WTC11 (cell line): ENCODE measurements at regions of chr6 and their contacts with region 1.

Region 1: DNA sequence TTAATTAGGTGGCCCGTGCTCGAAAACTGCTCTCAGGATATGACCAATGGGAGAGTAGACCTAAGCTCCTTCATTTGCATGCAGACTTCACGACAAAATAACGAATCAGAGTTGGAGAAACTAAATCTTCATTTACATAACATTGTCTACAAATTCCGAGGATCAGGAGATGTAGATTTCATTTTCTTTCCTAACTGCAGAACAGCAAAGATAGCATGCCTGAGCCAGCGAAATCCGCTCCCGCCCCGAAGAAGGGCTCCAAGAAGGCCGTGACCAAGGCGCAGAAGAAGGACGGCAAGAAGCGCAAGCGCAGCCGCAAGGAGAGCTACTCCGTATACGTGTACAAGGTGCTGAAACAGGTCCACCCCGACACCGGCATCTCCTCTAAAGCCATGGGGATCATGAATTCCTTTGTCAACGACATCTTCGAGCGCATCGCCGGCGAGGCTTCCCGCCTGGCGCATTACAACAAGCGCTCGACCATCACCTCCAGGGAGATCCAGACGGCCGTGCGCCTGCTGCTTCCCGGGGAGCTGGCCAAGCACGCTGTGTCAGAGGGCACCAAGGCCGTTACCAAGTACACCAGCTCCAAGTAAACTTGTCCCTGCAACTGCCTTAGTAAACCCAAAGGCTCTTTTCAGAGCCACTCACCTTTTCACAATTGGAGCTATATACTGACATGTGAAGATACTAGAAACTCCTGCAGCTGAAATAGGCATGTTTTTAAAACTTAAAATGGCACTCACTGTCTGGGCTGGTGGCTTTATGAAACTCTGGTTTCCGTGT is 96.5 kb downstream of the HFE start:
- DNase-seq: peak; percentile 74
- ATAC-seq: peak; percentile 78
- H3K4me3 Mint-ChIP-seq: peak overlapping the region; percentile 90
- H3K27ac Mint-ChIP-seq: peak overlapping the region; percentile 99
- H3K4me1 Mint-ChIP-seq: peaks cover 45% of the 10 kb centered on the region
- H3K27me3 Mint-ChIP-seq: no peaks in the 10 kb centered on the region
- CTCF ChIP-seq: no peak

Region 2: GRCh38 chr6:25882051-25882496 is 301.7 kb before region 1 on chr6:
- CTCF ChIA-PET with region 1: no interaction called
- POLR2A ChIA-PET with region 1: no interaction called
- DNase-seq: peak; percentile 89
- ATAC-seq: peak; percentile 99
- H3K4me3 Mint-ChIP-seq: peak overlapping the region; percentile 69
- H3K27ac Mint-ChIP-seq: peak overlapping the region; percentile 82; the same call in 1 of the 2 replicates
- H3K4me1 Mint-ChIP-seq: peaks cover 2% of the 10 kb centered on the region
- H3K27me3 Mint-ChIP-seq: peaks cover 2% of the 10 kb centered on the region
- CTCF ChIP-seq: no peak

Region 3: DNA sequence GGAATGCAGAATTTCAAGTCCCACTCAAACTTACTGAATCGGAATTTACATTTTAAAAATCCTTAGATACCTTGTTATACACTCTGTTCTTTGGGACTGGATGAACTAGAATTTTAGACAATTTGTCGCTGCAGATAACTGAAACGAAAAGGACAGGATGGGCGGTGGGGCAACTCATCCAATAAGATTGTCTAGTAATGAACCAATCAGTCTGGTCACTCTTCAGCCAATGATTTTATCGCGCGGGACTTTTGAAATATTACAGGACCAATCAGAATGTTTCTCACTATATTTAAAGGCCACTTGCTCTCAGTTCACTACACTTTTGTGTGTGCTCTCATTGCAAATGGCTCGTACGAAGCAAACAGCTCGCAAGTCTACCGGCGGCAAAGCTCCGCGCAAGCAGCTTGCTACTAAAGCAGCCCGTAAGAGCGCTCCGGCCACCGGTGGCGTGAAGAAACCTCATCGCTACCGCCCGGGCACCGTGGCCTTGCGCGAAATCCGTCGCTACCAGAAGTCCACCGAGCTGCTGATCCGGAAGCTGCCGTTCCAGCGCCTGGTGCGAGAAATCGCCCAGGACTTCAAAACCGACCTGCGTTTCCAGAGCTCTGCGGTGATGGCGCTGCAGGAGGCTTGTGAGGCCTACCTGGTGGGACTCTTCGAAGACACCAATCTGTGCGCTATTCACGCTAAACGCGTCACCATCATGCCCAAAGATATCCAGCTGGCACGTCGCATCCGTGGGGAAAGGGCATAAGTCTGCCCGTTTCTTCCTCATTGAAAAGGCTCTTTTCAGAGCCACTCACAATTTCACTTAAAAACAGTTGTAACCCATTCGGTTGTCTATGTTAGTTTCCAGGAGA is 138.5 kb before region 1 on chr6:
- CTCF ChIA-PET with region 1: no interaction called
- POLR2A ChIA-PET with region 1: interaction called, 17 read pairs
- DNase-seq: peak; percentile 43
- ATAC-seq: peak; percentile 22; the same call in 1 of the 2 replicates
- H3K4me3 Mint-ChIP-seq: peak overlapping the region; percentile 64
- H3K27ac Mint-ChIP-seq: peak overlapping the region; percentile 95
- H3K4me1 Mint-ChIP-seq: peaks cover 42% of the 10 kb centered on the region
- H3K27me3 Mint-ChIP-seq: no peaks in the 10 kb centered on the region
- CTCF ChIP-seq: no peak

Region 4: DNA sequence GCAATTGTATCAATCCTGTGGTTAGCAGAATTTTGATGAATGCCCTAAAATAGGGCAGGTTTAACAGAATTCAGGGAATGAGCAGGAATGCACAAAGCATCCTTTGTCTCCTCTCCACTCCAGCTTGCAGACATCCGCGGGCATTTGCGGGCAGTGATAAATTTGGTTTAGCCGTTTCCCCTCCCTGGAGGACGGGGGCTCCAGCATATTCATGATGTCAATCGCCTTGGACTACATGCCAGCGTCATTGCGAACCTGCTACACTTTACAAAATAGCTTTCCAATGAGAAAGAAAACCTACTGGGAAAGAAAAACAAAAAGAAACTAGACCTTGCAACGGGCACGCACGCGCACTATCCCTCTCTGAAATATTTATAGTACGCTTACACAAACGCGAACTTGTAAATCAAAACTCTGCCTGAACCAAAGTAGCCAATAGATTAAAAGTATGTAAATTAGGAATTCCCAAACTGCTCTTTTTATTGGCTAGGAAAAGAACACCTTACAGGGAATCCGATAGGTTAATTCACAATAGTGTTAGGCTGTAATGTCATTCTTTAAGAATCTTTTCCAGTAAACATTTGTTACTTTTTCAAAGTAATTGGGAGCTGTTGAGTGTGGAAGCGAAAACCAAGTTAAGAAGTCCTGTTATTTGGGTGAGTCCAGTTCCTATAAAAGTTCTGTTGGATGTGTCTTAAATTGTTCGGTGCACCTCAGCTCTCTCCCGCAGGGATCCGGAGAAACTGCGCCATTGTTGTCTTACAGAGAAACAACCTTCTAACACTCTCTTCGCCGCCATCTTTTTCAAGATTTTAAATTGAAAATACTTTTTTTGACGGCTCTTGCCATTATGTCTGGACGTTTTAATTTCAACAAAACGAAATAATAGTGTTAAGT is 40.1 kb after region 1 on chr6:
- CTCF ChIA-PET with region 1: no interaction called
- POLR2A ChIA-PET with region 1: interaction called, 39 read pairs
- DNase-seq: no peak
- ATAC-seq: peak; percentile 69
- H3K4me3 Mint-ChIP-seq: no peak overlapping the region
- H3K27ac Mint-ChIP-seq: no peak overlapping the region
- H3K4me1 Mint-ChIP-seq: peaks cover 42% of the 10 kb centered on the region
- H3K27me3 Mint-ChIP-seq: no peaks in the 10 kb centered on the region
- CTCF ChIP-seq: no peak

Region 5: DNA sequence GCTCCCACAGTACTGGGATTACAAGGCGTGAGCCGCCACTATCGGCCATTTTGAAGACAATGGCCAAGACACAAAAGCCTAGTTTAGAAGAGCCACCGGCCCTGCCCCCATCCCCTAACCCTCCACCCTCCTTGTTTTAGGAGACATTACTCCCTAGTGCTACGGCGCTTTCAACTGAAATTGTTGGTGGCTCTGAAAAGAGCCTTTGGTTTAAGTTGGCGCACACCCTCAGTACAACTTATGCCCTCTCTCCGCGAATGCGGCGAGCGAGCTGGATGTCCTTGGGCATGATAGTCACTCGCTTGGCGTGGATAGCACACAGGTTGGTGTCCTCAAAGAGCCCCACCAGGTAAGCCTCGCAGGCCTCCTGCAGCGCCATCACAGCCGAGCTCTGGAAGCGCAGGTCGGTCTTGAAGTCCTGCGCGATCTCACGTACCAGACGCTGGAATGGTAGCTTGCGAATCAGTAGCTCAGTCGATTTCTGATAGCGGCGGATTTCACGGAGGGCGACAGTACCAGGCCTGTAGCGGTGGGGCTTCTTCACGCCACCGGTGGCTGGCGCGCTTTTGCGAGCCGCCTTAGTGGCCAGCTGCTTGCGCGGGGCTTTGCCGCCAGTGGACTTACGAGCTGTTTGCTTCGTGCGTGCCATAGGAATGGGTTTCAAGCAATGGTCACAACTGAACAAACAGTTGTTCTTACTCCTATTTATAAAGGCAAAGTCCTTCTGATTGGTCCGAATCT is 66.4 kb after region 1 on chr6:
- CTCF ChIA-PET with region 1: no interaction called
- POLR2A ChIA-PET with region 1: interaction called, 37 read pairs
- DNase-seq: peak; percentile 74
- ATAC-seq: peak; percentile 53
- H3K4me3 Mint-ChIP-seq: peak overlapping the region; percentile 96
- H3K27ac Mint-ChIP-seq: peak overlapping the region; percentile 98
- H3K4me1 Mint-ChIP-seq: peaks cover 27% of the 10 kb centered on the region
- H3K27me3 Mint-ChIP-seq: no peaks in the 10 kb centered on the region
- CTCF ChIP-seq: no peak

Region 6: GRCh38 chr6:27132532-27133280 is 948.9 kb after region 1 on chr6:
- CTCF ChIA-PET with region 1: no interaction called
- POLR2A ChIA-PET with region 1: interaction called, 12 read pairs
- DNase-seq: peak; percentile 85
- ATAC-seq: peak; percentile 86
- H3K4me3 Mint-ChIP-seq: no peak overlapping the region
- H3K27ac Mint-ChIP-seq: no peak overlapping the region
- H3K4me1 Mint-ChIP-seq: peaks cover 65% of the 10 kb centered on the region
- H3K27me3 Mint-ChIP-seq: no peaks in the 10 kb centered on the region
- CTCF ChIP-seq: no peak

Region 7: GRCh38 chr6:27864906-27865849 is 1681.4 kb after region 1 on chr6:
- CTCF ChIA-PET with region 1: no interaction called
- POLR2A ChIA-PET with region 1: interaction called, 16 read pairs
- DNase-seq: peak; percentile 73
- ATAC-seq: peak; percentile 51
- H3K4me3 Mint-ChIP-seq: peak overlapping the region; percentile 97
- H3K27ac Mint-ChIP-seq: peak overlapping the region; percentile 100
- H3K4me1 Mint-ChIP-seq: peaks cover 25% of the 10 kb centered on the region
- H3K27me3 Mint-ChIP-seq: peaks cover 4% of the 10 kb centered on the region; the same call in 1 of the 2 replicates
- CTCF ChIP-seq: no peak